ENCODE measurements at regions of chr20 and their contacts with region 1.

Region 1: DNA sequence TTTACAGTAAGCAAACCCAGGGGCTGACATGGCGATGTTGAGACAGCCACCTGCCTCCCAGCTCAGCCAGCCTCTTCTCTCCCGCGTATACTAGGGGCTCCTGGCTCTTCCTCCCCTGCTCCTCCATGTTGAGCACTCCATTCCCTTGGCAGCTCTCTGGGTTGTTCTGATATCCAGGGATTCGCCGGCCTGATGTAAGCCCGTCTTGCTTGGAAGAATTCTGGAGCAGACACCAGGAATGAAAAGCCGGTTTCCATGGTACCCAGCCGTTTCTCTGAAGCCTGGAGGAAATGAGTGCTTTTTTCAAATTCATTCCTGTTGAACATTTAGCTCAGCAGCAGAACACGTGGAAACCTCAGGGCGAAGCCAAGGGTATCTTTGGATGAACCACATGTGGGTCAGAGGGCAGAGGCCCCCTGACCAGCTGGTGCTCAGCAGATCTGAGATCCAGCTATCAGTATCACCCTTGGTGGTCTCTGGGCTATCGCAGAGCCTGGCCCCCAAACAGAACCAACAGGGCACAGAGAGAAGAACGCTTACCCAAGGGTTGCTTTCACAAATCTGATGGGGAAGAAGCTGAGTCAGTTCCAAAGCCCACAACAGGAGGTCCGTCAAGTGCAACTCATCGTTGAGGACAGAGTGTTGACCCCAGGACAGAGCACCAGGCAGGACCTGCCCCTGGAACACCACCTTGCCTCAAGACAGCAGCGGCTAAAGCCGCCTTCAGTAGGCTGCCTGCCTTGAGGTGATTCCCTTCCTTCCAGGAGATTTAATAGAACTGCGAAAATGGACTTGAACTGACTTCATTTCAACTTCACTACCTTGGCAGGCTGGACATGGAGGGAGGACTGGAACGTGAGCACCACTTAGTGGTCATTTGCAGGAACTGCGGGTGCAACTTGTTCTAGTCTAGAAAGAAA is 96.1 kb upstream of the RIN2 start:
- DNase-seq: peak; percentile 49 to 52
- H3K4me3 ChIP-seq: no peak overlapping the region
- H3K27ac ChIP-seq: no peak overlapping the region
- H3K4me1 ChIP-seq: no peaks in the 10 kb centered on the region
- H3K27me3 ChIP-seq: peaks cover 94% of the 10 kb centered on the region
- CTCF ChIP-seq: peak; percentile 97

Region 2: GRCh38 chr20:18632196-18633009 is 1029.6 kb before region 1 on chr20:
- CTCF ChIA-PET with region 1: no interaction called
- POLR2A ChIA-PET with region 1: no interaction called
- intact Hi-C with region 1: loop called (anchors 5 kb)
- DNase-seq: peak in 1 of 2 experiments; percentile 57
- H3K4me3 ChIP-seq: no peak overlapping the region
- H3K27ac ChIP-seq: no peak overlapping the region
- H3K4me1 ChIP-seq: no peaks in the 10 kb centered on the region
- H3K27me3 ChIP-seq: no peaks in the 10 kb centered on the region
- CTCF ChIP-seq: peak; percentile 95

Region 3: DNA sequence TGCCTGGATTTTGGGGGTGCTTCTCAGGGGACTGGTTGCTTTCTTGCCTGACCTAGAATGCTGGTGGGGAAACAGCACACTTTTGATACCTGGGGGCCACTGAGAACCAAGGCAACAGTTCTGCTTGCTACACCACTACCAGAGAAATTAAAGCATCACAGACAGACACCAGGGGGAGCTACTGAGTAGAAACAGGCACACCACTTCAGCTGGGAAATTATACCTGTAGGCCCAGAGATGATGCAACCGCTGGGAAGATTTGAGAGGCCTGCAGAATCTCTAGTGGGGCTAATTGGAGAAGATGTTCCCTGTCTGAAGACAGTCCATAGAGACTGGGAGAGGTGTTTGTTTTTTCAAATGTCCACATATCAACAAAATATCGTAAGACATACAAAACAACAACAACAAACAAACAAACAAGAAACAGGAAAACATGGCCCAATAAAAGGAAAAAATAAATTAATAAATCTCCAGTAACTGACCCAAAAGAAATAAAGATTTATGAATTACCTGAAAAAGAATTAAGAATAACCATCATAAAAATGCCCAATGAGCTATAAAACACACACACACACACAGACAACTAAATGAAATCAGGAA is 33.3 kb before region 1 on chr20:
- CTCF ChIA-PET with region 1: no interaction called
- POLR2A ChIA-PET with region 1: no interaction called
- intact Hi-C with region 1: loop called (anchors 1 kb)
- DNase-seq: peak; percentile 54 to 61
- H3K4me3 ChIP-seq: no peak overlapping the region
- H3K27ac ChIP-seq: no peak overlapping the region
- H3K4me1 ChIP-seq: no peaks in the 10 kb centered on the region
- H3K27me3 ChIP-seq: peaks cover 27% of the 10 kb centered on the region
- CTCF ChIP-seq: peak; percentile 82